ENCODE measurements at regions of chr4 and their contacts with region 1.

Region 1: DNA sequence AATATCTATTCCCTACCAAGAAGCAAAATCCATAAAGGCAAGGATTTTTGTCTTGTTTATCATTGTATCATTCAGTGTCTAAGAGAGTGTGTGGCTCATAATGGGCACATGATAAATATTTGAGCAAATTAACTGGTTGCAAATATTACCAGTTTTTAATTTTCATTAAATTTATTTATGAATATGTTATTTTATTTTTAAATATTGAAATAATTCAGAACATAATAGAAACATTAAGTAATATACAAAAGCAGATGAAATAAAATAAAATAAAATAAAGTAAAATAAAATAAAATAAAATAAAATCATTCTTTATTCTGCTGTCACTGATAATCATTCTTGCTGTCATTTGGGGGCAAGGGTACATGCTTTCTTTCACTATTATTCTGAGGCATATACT is 120.9 kb downstream of the NPFFR2 start:
- DNase-seq: no peak
- H3K4me3 ChIP-seq: no peak overlapping the region
- CTCF ChIP-seq: no peak

Region 2: GRCh38 chr4:71765350-71765749 is 387.4 kb before region 1 on chr4:
- in situ Hi-C with region 1: no loop called
- DNase-seq: peak; percentile 78
- H3K4me3 ChIP-seq: no peak overlapping the region
- CTCF ChIP-seq: no peak

Region 3: DNA sequence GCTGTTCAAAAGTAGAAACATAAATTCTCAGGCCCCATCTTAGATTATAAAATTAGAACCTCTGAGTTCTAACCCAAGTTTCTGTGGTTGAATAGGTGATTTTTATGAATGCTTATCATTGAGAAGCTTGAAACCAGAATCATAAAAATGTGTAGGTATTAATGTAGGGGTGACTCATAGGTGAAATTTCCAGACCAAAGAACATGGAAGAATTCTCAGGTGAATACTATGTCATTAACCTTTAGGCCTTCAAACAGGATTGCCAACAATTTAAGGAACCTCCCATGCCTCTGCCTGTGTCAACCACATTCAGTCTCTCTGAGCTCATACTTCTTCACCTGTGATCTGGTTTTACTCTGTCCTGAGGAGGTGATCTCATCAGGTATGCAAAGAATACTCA is 56.9 kb after region 1 on chr4:
- in situ Hi-C with region 1: loop called (anchors 5 kb)
- DNase-seq: no peak
- H3K4me3 ChIP-seq: no peak overlapping the region
- CTCF ChIP-seq: no peak